Spleen (tissue), 13 donors: ENCODE measurements at regions of chr20 and their contacts with region 1.

Region 1: DNA sequence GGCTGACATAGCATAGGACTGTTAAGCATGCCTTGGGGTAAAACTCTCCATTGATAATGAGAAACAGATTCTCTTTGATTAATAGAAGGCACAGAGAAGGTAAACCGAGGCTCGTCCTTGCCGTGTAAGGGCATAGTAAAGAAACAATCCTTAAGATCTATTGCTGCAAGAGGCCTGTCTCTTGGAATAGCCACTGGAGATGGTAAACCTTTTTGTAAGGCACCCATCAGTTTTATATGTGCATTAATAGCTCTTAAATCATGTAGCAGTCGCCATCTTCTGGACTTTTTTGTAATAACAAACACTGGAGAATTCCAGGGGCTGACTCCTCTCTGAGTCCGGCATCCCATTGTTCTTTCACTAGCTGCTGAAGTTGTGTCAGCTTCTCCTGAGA is 8.4 kb upstream of the ABHD12 start:
- DNase-seq: no peak
- H3K4me3 ChIP-seq: no peak overlapping the region
- H3K27ac ChIP-seq: no peak overlapping the region
- H3K4me1 ChIP-seq: peaks cover 0 to 6% (median 0%) of the 10 kb centered on the region in 6 donors
- H3K27me3 ChIP-seq: peaks cover 0 to 6% (median 0%) of the 10 kb centered on the region in 7 donors
- CTCF ChIP-seq: peak in 10 of 11 experiments; percentile 9 to 73 (median 56)
- POLR2A ChIP-seq: no peak

Region 2: DNA sequence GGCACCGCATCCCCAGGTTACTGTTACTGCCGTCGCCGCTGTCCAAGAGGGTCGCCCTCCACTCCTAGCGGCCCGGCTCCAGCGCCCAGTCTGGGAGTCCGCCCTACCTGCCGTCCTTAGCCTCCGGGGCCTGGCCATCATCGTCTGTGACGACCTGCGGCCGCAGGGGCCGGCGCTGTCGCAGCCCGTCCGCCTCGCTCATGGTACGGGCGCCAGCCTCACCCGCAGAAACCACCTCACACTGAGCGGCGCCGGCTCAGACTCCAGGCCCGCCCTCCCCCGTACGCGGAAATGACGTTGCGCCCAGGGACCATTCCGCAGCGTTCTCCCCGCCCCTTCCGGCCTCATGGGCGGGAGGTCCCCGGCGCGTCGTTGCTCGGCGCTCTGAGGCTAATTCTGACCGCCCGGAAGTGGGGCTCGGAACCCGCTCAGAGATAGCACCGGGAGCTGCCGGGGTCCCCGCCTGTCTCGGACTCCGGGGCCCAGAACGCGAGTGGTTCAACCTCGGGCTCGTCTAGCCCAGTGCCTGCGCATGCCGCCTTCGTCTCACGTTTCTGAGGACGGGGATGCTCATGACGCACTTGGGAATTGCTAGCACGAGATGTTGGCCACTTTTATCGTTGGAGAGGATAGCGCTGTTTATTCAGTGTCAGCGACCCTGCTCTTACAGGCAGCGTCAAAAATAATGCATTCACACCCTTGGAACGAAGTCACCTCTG is 406.4 kb before region 1 on chr20 and contains the start of gene APMAP:
- intact Hi-C with region 1: loop called (anchors 5 kb)
- DNase-seq: peak; percentile 99
- H3K4me3 ChIP-seq: peak within 1 kb of the TSS; percentile 66 to 88 (median 73)
- H3K27ac ChIP-seq: peak within 1 kb of the TSS; percentile 75 to 97 (median 96)
- H3K4me1 ChIP-seq: peaks cover 12 to 72% (median 46%) of the 10 kb centered on the region in 6 donors
- H3K27me3 ChIP-seq: no peaks in the 10 kb centered on the region
- CTCF ChIP-seq: peak in 1 of 11 experiments; percentile 15
- POLR2A ChIP-seq: peak; percentile 38 to 90 (median 76)
- total RNA-seq, gene APMAP: 57.9 to 104 (median 78.8) TPM

Region 3: GRCh38 chr20:25294459-25295385 is 104.3 kb before region 1 on chr20:
- intact Hi-C with region 1: loop called (anchors 5 kb)
- DNase-seq: peak; percentile 87
- H3K4me3 ChIP-seq: no peak overlapping the region
- H3K27ac ChIP-seq: peak overlapping the region in 4 of 8 donors; percentile 43 to 81 (median 58)
- H3K4me1 ChIP-seq: peaks cover 0 to 37% (median 14%) of the 10 kb centered on the region in 6 donors
- H3K27me3 ChIP-seq: no peaks in the 10 kb centered on the region
- CTCF ChIP-seq: peak; percentile 54 to 82 (median 73)
- POLR2A ChIP-seq: no peak

Region 4: DNA sequence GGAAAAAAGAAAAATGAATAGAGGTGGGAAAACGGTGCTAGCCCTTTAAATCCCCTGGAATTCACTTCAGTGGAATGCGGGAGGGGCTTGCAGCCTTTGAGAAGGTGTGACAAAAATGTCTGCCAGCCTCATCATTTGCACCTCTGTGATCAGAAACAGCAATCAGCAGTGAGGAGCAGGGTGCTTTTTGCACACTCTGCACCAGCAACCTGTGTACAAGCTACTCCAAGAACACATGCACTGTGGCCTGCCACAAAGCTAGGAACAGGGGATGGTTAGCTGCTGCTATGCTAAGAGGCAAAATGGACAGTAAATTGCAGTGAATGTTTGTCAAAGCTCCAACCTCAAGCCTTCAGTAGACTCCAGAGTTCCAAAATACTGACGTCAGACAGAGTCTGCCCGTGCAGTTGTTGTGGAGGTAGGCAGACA is 38.1 kb after region 1 on chr20:
- intact Hi-C with region 1: no loop called
- DNase-seq: no peak
- H3K4me3 ChIP-seq: no peak overlapping the region
- H3K27ac ChIP-seq: no peak overlapping the region
- H3K4me1 ChIP-seq: peaks cover 0 to 9% (median 2%) of the 10 kb centered on the region in 6 donors
- H3K27me3 ChIP-seq: no peaks in the 10 kb centered on the region
- CTCF ChIP-seq: no peak
- POLR2A ChIP-seq: no peak